ENCODE measurements at regions of chr15 and their contacts with region 1.

Region 1: DNA sequence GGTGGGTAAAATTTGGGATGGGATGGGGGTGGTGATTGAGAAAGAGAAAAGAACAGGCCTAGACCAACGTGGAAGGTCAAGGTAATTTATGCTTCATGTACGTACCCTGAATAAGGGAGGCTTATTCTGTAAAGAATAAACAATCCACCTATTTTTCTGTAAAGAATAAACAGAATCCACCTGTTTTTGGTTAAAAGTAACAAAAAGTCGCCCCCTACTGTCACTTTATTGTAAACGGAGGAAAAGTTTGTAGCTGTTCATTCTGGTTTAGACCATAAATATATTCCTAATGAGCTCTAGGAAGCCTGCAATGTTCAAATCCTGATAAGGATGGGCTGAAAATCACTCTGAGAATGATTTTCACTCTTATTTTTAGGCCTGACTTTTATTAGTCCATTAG is 23.5 kb upstream of the SQOR start:
- DNase-seq: peak; percentile 57
- ATAC-seq: peak; percentile 39
- H3K4me3 ChIP-seq: no peak overlapping the region
- H3K4me3 Mint-ChIP-seq: no peak overlapping the region
- H3K27ac ChIP-seq: no peak overlapping the region
- H3K27ac Mint-ChIP-seq: no peak overlapping the region
- H3K4me1 ChIP-seq: peaks cover 15 to 17% of the 10 kb centered on the region in 2 donors
- H3K4me1 Mint-ChIP-seq: peaks cover 12% of the 10 kb centered on the region
- H3K27me3 ChIP-seq: no peaks in the 10 kb centered on the region
- H3K27me3 Mint-ChIP-seq: no peaks in the 10 kb centered on the region
- CTCF ChIP-seq: peak; percentile 77

Region 2: GRCh38 chr15:45307230-45307924 is 303.9 kb before region 1 on chr15:
- CTCF ChIA-PET with region 1: no interaction called
- POLR2A ChIA-PET with region 1: no interaction called
- intact Hi-C with region 1: loop called (anchors 5 kb)
- DNase-seq: peak; percentile 58
- ATAC-seq: peak; percentile 51
- H3K4me3 ChIP-seq: peak overlapping the region in 3 of 5 experiments; percentile 33 to 49 (median 41)
- H3K4me3 Mint-ChIP-seq: peak overlapping the region; percentile 71
- H3K27ac ChIP-seq: no peak overlapping the region
- H3K27ac Mint-ChIP-seq: no peak overlapping the region
- H3K4me1 ChIP-seq: peaks cover 0 to 3% of the 10 kb centered on the region in 2 donors
- H3K4me1 Mint-ChIP-seq: peaks cover 4% of the 10 kb centered on the region
- H3K27me3 ChIP-seq: peaks cover 0 to 14% (median 7%) of the 10 kb centered on the region in 4 experiments
- H3K27me3 Mint-ChIP-seq: peaks cover 29% of the 10 kb centered on the region
- CTCF ChIP-seq: peak; percentile 69

Region 3: GRCh38 chr15:45429974-45430792 is 181.1 kb before region 1 on chr15:
- CTCF ChIA-PET with region 1: interaction called, 47 read pairs
- POLR2A ChIA-PET with region 1: no interaction called
- intact Hi-C with region 1: loop called (anchors 1 kb)
- DNase-seq: peak; percentile 89
- ATAC-seq: peak; percentile 90
- H3K4me3 ChIP-seq: peak overlapping the region in 4 of 5 experiments; percentile 27 to 55 (median 51)
- H3K4me3 Mint-ChIP-seq: peak overlapping the region; percentile 67
- H3K27ac ChIP-seq: no peak overlapping the region
- H3K27ac Mint-ChIP-seq: no peak overlapping the region
- H3K4me1 ChIP-seq: peaks cover 4 to 8% of the 10 kb centered on the region in 2 donors
- H3K4me1 Mint-ChIP-seq: peaks cover 2% of the 10 kb centered on the region
- H3K27me3 ChIP-seq: peaks cover 0 to 10% (median 1%) of the 10 kb centered on the region in 4 experiments
- H3K27me3 Mint-ChIP-seq: peaks cover 6% of the 10 kb centered on the region
- CTCF ChIP-seq: peak; percentile 100

Region 4: DNA sequence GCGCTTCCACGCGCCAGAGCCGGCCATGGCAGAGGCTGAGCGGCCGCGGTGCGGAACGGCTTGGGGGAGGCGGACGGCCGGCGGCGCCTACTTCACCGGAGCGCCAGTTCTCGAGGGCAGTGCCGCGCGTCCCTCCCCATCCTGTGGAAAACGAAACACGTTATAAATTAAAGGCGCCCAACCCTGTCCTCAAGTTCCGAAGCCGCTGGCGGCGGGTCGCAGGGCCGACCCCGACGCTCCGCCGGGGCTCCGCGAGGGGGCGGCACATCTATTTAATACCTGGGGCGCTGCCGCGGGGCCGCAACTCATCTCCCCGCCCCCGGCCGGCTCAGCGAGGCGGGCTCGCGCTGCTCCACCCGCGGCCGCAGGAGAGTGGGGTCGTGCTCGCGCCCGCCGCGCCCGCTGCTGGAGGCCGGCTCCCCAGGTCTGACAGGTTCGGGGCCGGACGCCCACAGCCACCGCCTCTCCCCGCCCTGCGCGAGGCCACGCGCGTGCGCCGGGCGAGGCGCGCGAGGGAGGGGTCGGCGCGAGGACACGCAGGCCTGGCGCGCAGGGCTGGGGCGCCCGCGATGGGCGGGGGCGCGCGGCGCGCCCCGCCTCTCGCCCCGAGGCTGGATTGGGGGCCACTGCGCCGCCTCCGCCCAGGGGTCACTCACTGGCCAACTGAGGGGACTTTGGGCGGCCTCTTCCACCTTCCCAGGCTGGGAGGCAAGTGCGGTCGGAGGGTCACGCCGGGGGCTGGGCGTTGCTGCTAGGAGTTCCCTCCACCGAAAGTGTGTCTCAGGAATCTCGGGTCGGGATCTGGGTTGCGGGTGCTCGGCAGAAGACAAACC is 88.8 kb before region 1 on chr15 and contains the start of gene SLC30A4:
- CTCF ChIA-PET with region 1: interaction called, 50 read pairs
- POLR2A ChIA-PET with region 1: interaction called, 12 read pairs
- intact Hi-C with region 1: loop called (anchors 1 kb)
- DNase-seq: peak; percentile 86
- ATAC-seq: peak; percentile 81
- H3K4me3 ChIP-seq: peak within 1 kb of the TSS; percentile 60 to 95 (median 73)
- H3K4me3 Mint-ChIP-seq: peak within 1 kb of the TSS; percentile 94
- H3K27ac ChIP-seq: peak within 1 kb of the TSS; percentile 26 to 64
- H3K27ac Mint-ChIP-seq: peak within 1 kb of the TSS; percentile 92
- H3K4me1 ChIP-seq: peaks cover 26 to 32% of the 10 kb centered on the region in 2 donors
- H3K4me1 Mint-ChIP-seq: peaks cover 43% of the 10 kb centered on the region
- H3K27me3 ChIP-seq: no peaks in the 10 kb centered on the region
- H3K27me3 Mint-ChIP-seq: no peaks in the 10 kb centered on the region
- CTCF ChIP-seq: peak; percentile 71
- total RNA-seq, gene SLC30A4: 9.1 and 11.0 TPM in 2 replicates

Region 5: DNA sequence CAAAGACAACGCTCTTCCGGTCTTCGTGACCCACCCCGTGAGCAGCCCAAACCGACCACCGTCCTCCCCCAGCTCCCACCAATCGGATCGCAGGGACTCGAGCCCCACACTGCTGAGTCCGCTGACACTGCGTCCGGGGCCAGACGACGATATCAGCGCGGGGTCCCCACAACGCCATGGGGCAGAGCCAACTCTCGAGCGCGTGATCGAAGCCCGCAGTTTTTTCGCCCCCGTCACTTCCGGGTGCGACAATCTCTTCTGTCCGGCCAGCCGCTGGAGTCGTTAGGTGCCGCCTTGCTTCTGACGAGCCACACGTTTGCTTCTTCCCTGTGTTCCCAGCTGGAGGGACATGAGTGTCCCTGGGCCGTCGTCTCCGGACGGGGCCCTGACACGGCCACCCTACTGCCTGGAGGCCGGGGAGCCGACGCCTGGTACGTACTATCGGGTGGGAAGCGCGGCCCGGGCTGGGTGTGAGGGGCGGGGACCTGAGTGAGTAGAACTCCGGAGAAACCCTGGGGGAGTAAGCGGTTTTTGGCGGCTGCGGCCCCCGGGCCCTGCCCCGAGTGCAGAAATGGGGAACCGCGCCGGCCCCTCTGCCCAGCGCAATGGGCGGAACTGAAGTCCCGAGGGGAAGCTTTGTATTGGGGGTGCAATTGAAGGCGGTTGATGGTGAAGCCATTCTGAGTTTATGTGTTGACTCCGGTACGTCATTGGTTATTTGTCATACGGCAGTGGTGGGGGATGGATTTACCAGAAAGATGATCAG is 24.0 kb before region 1 on chr15 and contains the start of gene BLOC1S6:
- CTCF ChIA-PET with region 1: interaction called, 64 read pairs
- POLR2A ChIA-PET with region 1: interaction called, 6 read pairs
- intact Hi-C with region 1: loop called (anchors 1 kb)
- DNase-seq: peak; percentile 99
- ATAC-seq: peak; percentile 86
- H3K4me3 ChIP-seq: peak within 1 kb of the TSS; percentile 64 to 98 (median 89)
- H3K4me3 Mint-ChIP-seq: peak within 1 kb of the TSS; percentile 100
- H3K27ac ChIP-seq: peak within 1 kb of the TSS; percentile 98 to 99
- H3K27ac Mint-ChIP-seq: peak within 1 kb of the TSS; percentile 100
- H3K4me1 ChIP-seq: peaks cover 22 to 29% of the 10 kb centered on the region in 2 donors
- H3K4me1 Mint-ChIP-seq: peaks cover 46% of the 10 kb centered on the region
- H3K27me3 ChIP-seq: no peaks in the 10 kb centered on the region
- H3K27me3 Mint-ChIP-seq: no peaks in the 10 kb centered on the region
- CTCF ChIP-seq: no peak
- total RNA-seq, gene BLOC1S6: 51.3 and 60.8 TPM in 2 replicates

Region 6: GRCh38 chr15:45594319-45594718 is 17.0 kb before region 1 on chr15:
- CTCF ChIA-PET with region 1: interaction called, 64 read pairs
- POLR2A ChIA-PET with region 1: no interaction called
- intact Hi-C with region 1: no loop called
- DNase-seq: no peak
- ATAC-seq: no peak
- H3K4me3 ChIP-seq: no peak overlapping the region
- H3K4me3 Mint-ChIP-seq: no peak overlapping the region
- H3K27ac ChIP-seq: no peak overlapping the region
- H3K27ac Mint-ChIP-seq: no peak overlapping the region
- H3K4me1 ChIP-seq: peaks cover 0 to 4% of the 10 kb centered on the region in 2 donors
- H3K4me1 Mint-ChIP-seq: peaks cover 23% of the 10 kb centered on the region
- H3K27me3 ChIP-seq: no peaks in the 10 kb centered on the region
- H3K27me3 Mint-ChIP-seq: no peaks in the 10 kb centered on the region
- CTCF ChIP-seq: no peak

Region 7: DNA sequence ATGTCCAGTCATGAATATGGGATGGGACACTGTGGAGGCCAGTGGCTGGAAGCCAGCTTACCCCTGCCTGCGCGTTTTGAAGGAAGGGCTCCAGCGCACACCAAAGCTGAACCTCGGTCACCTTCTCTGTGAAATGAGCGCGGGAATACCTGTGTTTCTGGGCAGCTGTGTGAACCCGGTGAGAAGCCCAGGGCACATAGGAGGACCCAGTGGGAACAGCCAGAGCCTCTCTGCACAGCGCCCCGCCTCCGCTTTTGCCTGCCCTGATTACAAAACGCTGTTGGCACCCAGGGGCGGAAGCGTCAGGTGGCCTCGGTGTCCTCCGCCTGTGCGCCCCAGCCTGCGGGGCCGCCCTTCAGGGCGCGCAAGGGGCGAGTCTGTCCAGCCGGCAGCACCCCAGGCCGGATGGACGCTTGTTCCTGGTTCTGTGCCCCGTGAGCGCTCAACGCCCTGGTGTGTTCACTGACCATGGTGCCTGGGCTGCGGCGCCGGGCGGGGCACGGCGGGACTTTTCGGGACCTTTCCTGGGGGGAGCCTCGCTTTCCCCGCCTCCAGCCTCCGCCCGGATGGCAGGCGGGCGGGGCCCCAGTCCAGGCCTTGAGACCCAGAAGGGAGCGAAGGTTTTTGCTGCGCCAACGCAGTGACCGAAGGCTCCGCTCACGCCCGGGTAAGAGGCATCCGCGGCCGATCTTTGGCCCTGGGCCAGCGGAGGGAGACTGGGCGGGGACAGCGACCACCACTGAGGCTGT is 23.3 kb after region 1 on chr15 and contains the start of gene SQOR:
- CTCF ChIA-PET with region 1: interaction called, 11 read pairs
- POLR2A ChIA-PET with region 1: interaction called, 5 read pairs
- intact Hi-C with region 1: no loop called
- DNase-seq: peak; percentile 79
- ATAC-seq: peak; percentile 74
- H3K4me3 ChIP-seq: peak within 1 kb of the TSS; percentile 81 to 91 (median 86)
- H3K4me3 Mint-ChIP-seq: peak within 1 kb of the TSS; percentile 99
- H3K27ac ChIP-seq: peak within 1 kb of the TSS; percentile 69 to 78
- H3K27ac Mint-ChIP-seq: peak within 1 kb of the TSS; percentile 97
- H3K4me1 ChIP-seq: peaks cover 30 to 36% of the 10 kb centered on the region in 2 donors
- H3K4me1 Mint-ChIP-seq: peaks cover 39% of the 10 kb centered on the region
- H3K27me3 ChIP-seq: no peaks in the 10 kb centered on the region
- H3K27me3 Mint-ChIP-seq: no peaks in the 10 kb centered on the region
- CTCF ChIP-seq: no peak
- total RNA-seq, gene SQOR: 24.3 and 25.6 TPM in 2 replicates

Region 8: GRCh38 chr15:45829336-45830153 is 218.2 kb after region 1 on chr15:
- CTCF ChIA-PET with region 1: no interaction called
- POLR2A ChIA-PET with region 1: no interaction called
- intact Hi-C with region 1: no loop called
- DNase-seq: no peak
- ATAC-seq: no peak
- H3K4me3 ChIP-seq: no peak overlapping the region
- H3K4me3 Mint-ChIP-seq: no peak overlapping the region
- H3K27ac ChIP-seq: no peak overlapping the region
- H3K27ac Mint-ChIP-seq: no peak overlapping the region
- H3K4me1 ChIP-seq: no peaks in the 10 kb centered on the region
- H3K4me1 Mint-ChIP-seq: no peaks in the 10 kb centered on the region
- H3K27me3 ChIP-seq: no peaks in the 10 kb centered on the region
- H3K27me3 Mint-ChIP-seq: no peaks in the 10 kb centered on the region
- CTCF ChIP-seq: no peak

Region 9: DNA sequence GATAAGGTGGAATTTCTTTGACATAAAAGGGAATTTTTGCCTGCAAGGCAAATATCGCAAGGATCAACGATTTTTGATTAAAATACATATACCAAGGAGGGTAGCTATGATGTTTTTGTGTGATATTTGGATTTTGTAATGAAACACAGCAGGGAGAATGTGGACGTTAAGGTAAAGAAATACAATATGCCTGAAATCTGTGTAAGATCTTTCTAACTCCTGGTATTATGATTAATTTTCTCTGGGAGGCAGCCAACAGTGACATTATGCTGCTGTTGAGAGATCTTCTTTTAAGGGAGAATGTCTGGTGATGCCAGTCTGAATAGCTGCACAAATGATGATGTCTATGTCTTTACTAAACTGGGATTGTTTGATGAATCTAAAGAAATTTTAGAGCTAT is 995.8 kb after region 1 on chr15:
- CTCF ChIA-PET with region 1: no interaction called
- POLR2A ChIA-PET with region 1: no interaction called
- intact Hi-C with region 1: no loop called
- DNase-seq: no peak
- ATAC-seq: no peak
- H3K4me3 ChIP-seq: no peak overlapping the region
- H3K4me3 Mint-ChIP-seq: no peak overlapping the region
- H3K27ac ChIP-seq: no peak overlapping the region
- H3K27ac Mint-ChIP-seq: no peak overlapping the region
- H3K4me1 ChIP-seq: no peaks in the 10 kb centered on the region
- H3K4me1 Mint-ChIP-seq: no peaks in the 10 kb centered on the region
- H3K27me3 ChIP-seq: no peaks in the 10 kb centered on the region
- H3K27me3 Mint-ChIP-seq: no peaks in the 10 kb centered on the region
- CTCF ChIP-seq: no peak